Activated CD4-positive, alpha-beta memory T cell treated with anti-CD3 and anti-CD28 coated beads for 36 hours (primary cell): ENCODE measurements at regions of chr19 and their contacts with region 1.

Region 1: GRCh38 chr19:3692141-3693024 is 7.9 kb downstream of the PIP5K1C start:
- DNase-seq: peak; percentile 66
- H3K4me3 Mint-ChIP-seq: no peak overlapping the region
- H3K27ac Mint-ChIP-seq: no peak overlapping the region
- H3K4me1 Mint-ChIP-seq: peaks cover 28% of the 10 kb centered on the region
- H3K27me3 Mint-ChIP-seq: no peaks in the 10 kb centered on the region

Region 2: DNA sequence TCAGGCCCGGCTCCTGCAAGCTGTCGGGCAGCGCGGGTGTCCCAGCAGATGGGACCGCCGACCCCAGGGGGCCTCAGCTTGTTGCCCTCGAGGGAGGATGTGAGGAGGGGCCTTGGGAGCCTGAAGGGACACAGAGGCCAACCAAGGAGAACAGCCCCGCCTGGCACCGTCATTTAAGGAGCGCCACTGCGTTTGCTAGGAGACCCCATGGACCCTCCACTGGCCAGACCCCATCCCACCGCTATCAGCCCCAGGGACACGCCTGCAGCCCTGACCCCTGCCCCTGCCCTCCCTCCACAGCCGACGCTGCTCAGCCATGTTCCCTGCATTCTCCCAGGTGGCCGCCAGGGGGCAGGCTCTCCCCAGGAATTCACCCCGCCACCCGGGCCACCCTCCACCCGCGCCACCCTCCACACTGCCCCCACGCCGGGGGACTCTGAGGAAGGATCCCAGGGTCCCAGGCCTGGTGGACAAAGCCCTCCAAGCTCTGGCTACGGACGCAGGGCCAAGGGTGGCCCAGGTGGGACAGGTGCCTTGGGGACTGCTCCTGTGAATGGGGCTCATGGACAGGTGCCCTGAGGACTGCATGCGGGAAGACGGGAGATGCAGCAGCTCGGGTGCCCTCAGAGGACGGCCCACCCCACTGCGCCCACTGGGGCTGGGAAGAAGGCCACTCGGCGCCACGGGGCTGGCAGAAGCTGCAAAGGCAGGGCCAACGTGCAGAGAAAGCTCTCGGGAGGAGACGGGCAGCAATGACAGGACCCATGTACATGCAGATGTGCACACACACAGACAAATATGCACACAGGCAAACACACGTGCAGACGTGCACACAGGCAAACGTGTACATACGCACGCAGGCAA is 26.5 kb before region 1 on chr19:
- CTCF ChIA-PET with region 1: interaction called, 15 read pairs
- POLR2A ChIA-PET with region 1: interaction called, 5 read pairs
- intact Hi-C with region 1: loop called (anchors 2 kb)
- DNase-seq: peak; percentile 82
- H3K4me3 Mint-ChIP-seq: no peak overlapping the region
- H3K27ac Mint-ChIP-seq: no peak overlapping the region
- H3K4me1 Mint-ChIP-seq: peaks cover 5% of the 10 kb centered on the region
- H3K27me3 Mint-ChIP-seq: no peaks in the 10 kb centered on the region

Region 3: DNA sequence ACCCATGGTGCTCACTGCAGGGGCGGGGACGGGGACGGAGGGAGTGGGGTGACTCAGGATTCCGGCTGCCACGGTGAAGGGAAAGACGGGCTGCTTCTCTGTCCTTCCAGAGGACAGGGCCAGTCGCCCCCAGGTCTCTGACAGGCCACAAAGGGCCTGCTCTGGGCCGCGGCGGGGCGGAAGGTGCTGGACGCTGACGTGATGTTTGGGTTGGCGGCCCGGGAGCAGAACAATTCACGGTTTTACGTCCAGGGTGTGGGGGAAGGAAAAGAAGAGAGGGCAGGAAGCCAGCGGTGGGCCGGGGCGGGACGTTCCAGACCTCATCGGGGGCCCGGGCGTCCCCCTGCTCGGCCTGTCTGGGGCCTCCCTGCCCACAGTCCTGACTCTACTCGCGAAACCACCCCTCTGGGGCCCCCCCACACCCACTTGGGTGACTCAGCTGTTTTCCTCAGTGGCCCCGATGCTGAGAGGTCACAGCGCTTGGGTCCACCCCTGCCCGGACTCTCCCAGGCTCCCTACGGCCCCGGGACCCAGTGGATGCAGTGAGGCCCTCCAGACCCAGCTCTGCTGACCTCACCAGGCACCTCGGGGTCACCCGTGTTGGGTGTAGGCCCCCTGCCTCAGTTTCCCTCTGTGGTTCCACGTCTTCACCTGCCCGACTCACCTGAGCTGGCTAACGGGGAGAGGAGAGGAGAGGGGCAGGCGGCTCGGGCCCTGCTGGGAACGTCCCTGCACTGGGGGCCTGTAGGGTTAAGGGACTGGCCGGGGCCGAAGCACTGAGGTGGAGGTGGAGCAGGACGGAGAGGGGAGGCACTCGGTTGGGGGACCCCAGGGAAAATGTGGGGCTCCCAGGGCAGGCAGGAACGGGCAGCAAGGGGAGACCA is 21.3 kb before region 1 on chr19:
- CTCF ChIA-PET with region 1: interaction called, 15 read pairs
- POLR2A ChIA-PET with region 1: interaction called, 5 read pairs
- intact Hi-C with region 1: loop called (anchors 2 kb)
- DNase-seq: peak; percentile 76
- H3K4me3 Mint-ChIP-seq: no peak overlapping the region
- H3K27ac Mint-ChIP-seq: peak overlapping the region; percentile 61
- H3K4me1 Mint-ChIP-seq: peaks cover 20% of the 10 kb centered on the region
- H3K27me3 Mint-ChIP-seq: no peaks in the 10 kb centered on the region

Region 4: DNA sequence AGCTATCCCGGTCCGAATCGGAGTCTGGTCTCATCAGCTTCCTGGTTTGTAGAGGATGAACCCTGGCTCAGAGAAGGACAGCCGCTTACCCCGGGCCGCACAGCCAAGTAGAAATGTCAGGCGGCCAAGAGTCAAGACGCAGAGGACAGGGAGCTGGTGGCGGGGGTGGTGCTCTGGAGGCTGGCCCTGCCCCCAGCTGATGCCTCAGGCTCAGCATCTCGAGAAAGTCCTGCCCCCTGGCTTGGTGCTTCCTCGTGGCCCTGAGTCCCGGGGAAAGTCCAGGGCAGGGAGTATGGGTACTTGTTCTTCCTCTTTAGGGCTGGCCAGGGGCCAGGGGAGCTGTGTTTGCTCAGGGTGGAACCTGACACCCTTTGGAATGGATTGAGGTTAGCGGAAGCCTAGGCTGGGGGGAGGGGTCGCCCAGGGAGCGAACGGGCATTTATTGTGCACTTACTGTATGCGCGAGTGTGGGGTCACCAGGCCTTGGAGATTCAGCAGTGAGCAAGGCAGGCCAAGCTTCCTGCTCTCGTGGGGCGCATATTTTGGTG is 18.0 kb after region 1 on chr19:
- CTCF ChIA-PET with region 1: interaction called, 10 read pairs
- POLR2A ChIA-PET with region 1: no interaction called
- intact Hi-C with region 1: no loop called
- DNase-seq: no peak
- H3K4me3 Mint-ChIP-seq: no peak overlapping the region
- H3K27ac Mint-ChIP-seq: no peak overlapping the region
- H3K4me1 Mint-ChIP-seq: peaks cover 4% of the 10 kb centered on the region
- H3K27me3 Mint-ChIP-seq: peaks cover 2% of the 10 kb centered on the region